ENCODE measurements at regions of chr14 and their contacts with region 1.

Region 1: GRCh38 chr14:56491299-56492285 is 88.0 kb upstream of the TMEM260 start:
- DNase-seq: peak; percentile 25
- H3K4me3 Mint-ChIP-seq: no peak overlapping the region
- H3K27ac Mint-ChIP-seq: no peak overlapping the region
- H3K4me1 Mint-ChIP-seq: peaks cover 7% of the 10 kb centered on the region
- H3K27me3 Mint-ChIP-seq: no peaks in the 10 kb centered on the region

Region 2: GRCh38 chr14:55546212-55546874 is 945.2 kb before region 1 on chr14:
- CTCF ChIA-PET with region 1: no interaction called
- POLR2A ChIA-PET with region 1: no interaction called
- intact Hi-C with region 1: no loop called
- DNase-seq: no peak
- H3K4me3 Mint-ChIP-seq: no peak overlapping the region
- H3K27ac Mint-ChIP-seq: no peak overlapping the region
- H3K4me1 Mint-ChIP-seq: no peaks in the 10 kb centered on the region
- H3K27me3 Mint-ChIP-seq: no peaks in the 10 kb centered on the region

Region 3: GRCh38 chr14:56452940-56453339 is 38.7 kb before region 1 on chr14:
- CTCF ChIA-PET with region 1: no interaction called
- POLR2A ChIA-PET with region 1: no interaction called
- intact Hi-C with region 1: no loop called
- DNase-seq: no peak
- H3K4me3 Mint-ChIP-seq: no peak overlapping the region
- H3K27ac Mint-ChIP-seq: no peak overlapping the region
- H3K4me1 Mint-ChIP-seq: no peaks in the 10 kb centered on the region
- H3K27me3 Mint-ChIP-seq: peaks cover 21% of the 10 kb centered on the region

Region 4: GRCh38 chr14:56514663-56515371 is 23.2 kb after region 1 on chr14:
- CTCF ChIA-PET with region 1: interaction called, 11 read pairs
- POLR2A ChIA-PET with region 1: no interaction called
- intact Hi-C with region 1: no loop called
- DNase-seq: peak; percentile 38
- H3K4me3 Mint-ChIP-seq: no peak overlapping the region
- H3K27ac Mint-ChIP-seq: no peak overlapping the region
- H3K4me1 Mint-ChIP-seq: peaks cover 10% of the 10 kb centered on the region
- H3K27me3 Mint-ChIP-seq: peaks cover 9% of the 10 kb centered on the region

Region 5: GRCh38 chr14:56979936-56980335 is 488.3 kb after region 1 on chr14:
- CTCF ChIA-PET with region 1: no interaction called
- POLR2A ChIA-PET with region 1: no interaction called
- intact Hi-C with region 1: no loop called
- DNase-seq: no peak
- H3K4me3 Mint-ChIP-seq: no peak overlapping the region
- H3K27ac Mint-ChIP-seq: no peak overlapping the region
- H3K4me1 Mint-ChIP-seq: no peaks in the 10 kb centered on the region
- H3K27me3 Mint-ChIP-seq: peaks cover 8% of the 10 kb centered on the region

Region 6: GRCh38 chr14:57066887-57067513 is 575.4 kb after region 1 on chr14:
- CTCF ChIA-PET with region 1: interaction called, 5 read pairs
- POLR2A ChIA-PET with region 1: no interaction called
- intact Hi-C with region 1: loop called (anchors 2 kb)
- DNase-seq: peak; percentile 65
- H3K4me3 Mint-ChIP-seq: no peak overlapping the region
- H3K27ac Mint-ChIP-seq: no peak overlapping the region
- H3K4me1 Mint-ChIP-seq: peaks cover under 1% of the 10 kb centered on the region
- H3K27me3 Mint-ChIP-seq: peaks cover 23% of the 10 kb centered on the region

Region 7: DNA sequence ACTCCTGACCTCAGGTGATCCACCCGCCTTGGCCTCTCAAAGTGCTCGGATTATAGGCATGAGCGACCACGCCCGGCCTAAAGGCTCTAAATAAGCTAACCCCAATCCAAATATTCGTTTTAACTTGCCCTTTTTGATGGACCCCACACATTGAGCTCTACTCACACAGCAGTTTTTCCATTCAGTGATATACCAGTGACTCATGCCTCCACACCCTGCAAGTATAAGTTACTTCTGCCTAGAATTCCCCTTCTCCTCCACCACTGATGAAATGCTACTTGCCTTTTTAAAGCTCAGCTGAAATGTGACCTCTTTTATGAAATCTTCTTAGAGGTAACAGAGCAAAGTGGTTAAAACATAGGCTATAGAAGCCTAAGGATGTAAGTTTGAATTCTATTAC is 708.3 kb after region 1 on chr14:
- CTCF ChIA-PET with region 1: interaction called, 5 read pairs
- POLR2A ChIA-PET with region 1: no interaction called
- intact Hi-C with region 1: loop called (anchors 5 kb)
- DNase-seq: no peak
- H3K4me3 Mint-ChIP-seq: no peak overlapping the region
- H3K27ac Mint-ChIP-seq: no peak overlapping the region
- H3K4me1 Mint-ChIP-seq: no peaks in the 10 kb centered on the region
- H3K27me3 Mint-ChIP-seq: peaks cover 7% of the 10 kb centered on the region

Measured in activated CD4-positive, alpha-beta memory T cell treated with anti-CD3 and anti-CD28 coated beads for 36 hours (primary cell).